ENCODE measurements at regions of chr10 and their contacts with region 1.

Region 1: GRCh38 chr10:104353325-104354048 is at the start of gene CFAP58:
- DNase-seq: peak; percentile 48 to 84
- H3K4me3 ChIP-seq: peak within 1 kb of the TSS; percentile 21; the same call in 1 of the 2 replicates
- H3K27ac ChIP-seq: no peak within 1 kb of the TSS
- H3K4me1 ChIP-seq: peaks cover 30% of the 10 kb centered on the region
- H3K27me3 ChIP-seq: peaks cover 3% of the 10 kb centered on the region; the same call in 1 of the 2 replicates
- CTCF ChIP-seq: peak; percentile 62
- total RNA-seq, gene CFAP58: 0.15 and 0.31 TPM in 2 replicates

Region 2: GRCh38 chr10:104291439-104291951 is 62.0 kb before region 1 on chr10:
- CTCF ChIA-PET with region 1: interaction called, 10 read pairs
- POLR2A ChIA-PET with region 1: no interaction called
- intact Hi-C with region 1: loop called (anchors 1 kb)
- DNase-seq: peak; percentile 58 to 71
- H3K4me3 ChIP-seq: no peak overlapping the region
- H3K27ac ChIP-seq: no peak overlapping the region
- H3K4me1 ChIP-seq: 0 out of 2 replicates have a peak, but pooled peaks cover 3% of the 10 kb centered on the region
- H3K27me3 ChIP-seq: no peaks in the 10 kb centered on the region
- CTCF ChIP-seq: peak; percentile 95

Region 3: DNA sequence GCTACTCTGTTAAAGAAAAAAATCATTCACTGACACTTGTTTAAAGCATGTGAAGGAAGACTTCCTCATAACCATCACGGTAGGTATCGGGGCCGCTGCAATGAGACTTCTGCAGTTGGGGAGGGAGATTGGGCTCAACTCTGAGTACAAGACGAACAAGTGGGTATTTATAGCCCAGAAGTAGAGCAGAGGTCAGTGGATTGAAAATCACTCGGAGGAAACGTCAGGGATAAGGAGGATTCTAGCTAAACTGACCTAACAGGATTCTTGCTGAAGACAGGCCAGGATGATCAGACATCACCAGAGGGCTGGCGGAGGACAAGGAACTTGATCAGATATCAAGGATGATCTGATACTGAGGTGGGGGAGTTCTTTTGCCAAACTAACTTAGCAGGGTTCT is 48.5 kb before region 1 on chr10:
- CTCF ChIA-PET with region 1: no interaction called
- POLR2A ChIA-PET with region 1: no interaction called
- intact Hi-C with region 1: loop called (anchors 1 kb)
- DNase-seq: peak in 1 of 2 experiments; percentile 55
- H3K4me3 ChIP-seq: no peak overlapping the region
- H3K27ac ChIP-seq: peak overlapping the region; percentile 43; the same call in 1 of the 2 replicates
- H3K4me1 ChIP-seq: peaks cover 15% of the 10 kb centered on the region
- H3K27me3 ChIP-seq: no peaks in the 10 kb centered on the region
- CTCF ChIP-seq: no peak

Measured in PC-9 (cell line).